MCF 10A (cell line): ENCODE measurements at regions of chr18 and their contacts with region 1.

Region 1: GRCh38 chr18:839224-840022 is 27.4 kb upstream of the YES1 start:
- DNase-seq: peak; percentile 79
- H3K4me3 Mint-ChIP-seq: no peak overlapping the region
- H3K27ac Mint-ChIP-seq: no peak overlapping the region
- H3K4me1 Mint-ChIP-seq: peaks cover 12% of the 10 kb centered on the region
- H3K27me3 Mint-ChIP-seq: no peaks in the 10 kb centered on the region
- CTCF ChIP-seq: peak; percentile 83

Region 2: GRCh38 chr18:286515-287310 is 552.7 kb before region 1 on chr18:
- CTCF ChIA-PET with region 1: interaction called, 4 read pairs
- POLR2A ChIA-PET with region 1: no interaction called
- intact Hi-C with region 1: loop called (anchors 5 kb)
- DNase-seq: peak; percentile 35
- H3K4me3 Mint-ChIP-seq: no peak overlapping the region
- H3K27ac Mint-ChIP-seq: no peak overlapping the region
- H3K4me1 Mint-ChIP-seq: no peaks in the 10 kb centered on the region
- H3K27me3 Mint-ChIP-seq: no peaks in the 10 kb centered on the region
- CTCF ChIP-seq: peak; percentile 28

Region 3: GRCh38 chr18:623761-624620 is 215.4 kb before region 1 on chr18:
- CTCF ChIA-PET with region 1: interaction called, 266 read pairs
- POLR2A ChIA-PET with region 1: no interaction called
- intact Hi-C with region 1: loop called (anchors 1 kb)
- DNase-seq: peak; percentile 69
- H3K4me3 Mint-ChIP-seq: no peak overlapping the region
- H3K27ac Mint-ChIP-seq: no peak overlapping the region
- H3K4me1 Mint-ChIP-seq: peaks cover 8% of the 10 kb centered on the region
- H3K27me3 Mint-ChIP-seq: peaks cover 24% of the 10 kb centered on the region
- CTCF ChIP-seq: peak; percentile 62

Region 4: DNA sequence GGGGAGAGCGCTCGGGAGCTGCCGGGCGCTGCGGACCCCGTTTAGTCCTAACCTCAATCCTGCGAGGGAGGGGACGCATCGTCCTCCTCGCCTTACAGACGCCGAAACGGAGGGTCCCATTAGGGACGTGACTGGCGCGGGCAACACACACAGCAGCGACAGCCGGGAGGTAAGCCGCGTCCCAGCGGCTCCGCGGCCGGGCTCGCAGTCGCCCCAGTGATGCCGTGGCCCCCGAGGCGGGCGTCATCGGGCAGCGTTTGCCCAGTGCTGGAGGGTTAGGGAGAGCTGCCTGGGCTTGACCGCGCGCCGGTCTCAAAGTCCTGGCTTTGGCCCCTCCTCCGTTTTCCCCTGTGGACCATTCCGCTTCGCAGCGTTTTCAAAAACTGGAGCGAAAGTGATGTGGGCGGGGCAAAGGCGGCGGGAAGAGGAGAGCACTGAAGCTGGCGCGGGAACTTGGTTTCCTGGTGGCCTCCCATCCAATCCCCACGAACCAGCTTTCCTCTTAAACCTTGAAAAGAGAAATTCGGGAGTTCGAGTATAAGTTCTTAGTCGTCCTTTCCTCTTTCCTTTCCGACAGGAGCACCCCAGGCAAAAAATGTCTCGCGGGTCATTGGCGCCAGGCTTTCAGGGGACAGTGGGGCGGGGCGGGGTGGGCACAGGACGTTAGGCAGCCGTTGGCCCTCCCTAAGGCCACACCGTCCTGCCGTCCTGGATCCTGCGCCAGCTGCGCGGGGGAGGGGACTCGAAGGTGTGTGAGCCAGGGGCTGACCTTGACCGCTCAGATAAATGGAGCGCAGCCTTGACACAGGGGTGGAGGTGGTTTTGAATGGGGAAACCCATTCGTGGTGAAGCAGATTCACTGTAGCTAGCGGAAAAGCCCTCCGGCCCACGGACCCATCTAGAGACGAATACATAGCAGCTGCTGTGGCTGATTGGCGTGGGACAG is 181.1 kb before region 1 on chr18:
- CTCF ChIA-PET with region 1: interaction called, 10 read pairs
- POLR2A ChIA-PET with region 1: no interaction called
- intact Hi-C with region 1: no loop called
- DNase-seq: peak; percentile 94
- H3K4me3 Mint-ChIP-seq: peak overlapping the region; percentile 81
- H3K27ac Mint-ChIP-seq: no peak overlapping the region
- H3K4me1 Mint-ChIP-seq: peaks cover 6% of the 10 kb centered on the region
- H3K27me3 Mint-ChIP-seq: no peaks in the 10 kb centered on the region
- CTCF ChIP-seq: no peak

Region 5: GRCh38 chr18:741931-742512 is 97.4 kb before region 1 on chr18:
- CTCF ChIA-PET with region 1: interaction called, 277 read pairs
- POLR2A ChIA-PET with region 1: no interaction called
- intact Hi-C with region 1: loop called (anchors 2 kb)
- DNase-seq: peak; percentile 45
- H3K4me3 Mint-ChIP-seq: no peak overlapping the region
- H3K27ac Mint-ChIP-seq: no peak overlapping the region
- H3K4me1 Mint-ChIP-seq: peaks cover 6% of the 10 kb centered on the region
- H3K27me3 Mint-ChIP-seq: no peaks in the 10 kb centered on the region
- CTCF ChIP-seq: peak; percentile 72

Region 6: DNA sequence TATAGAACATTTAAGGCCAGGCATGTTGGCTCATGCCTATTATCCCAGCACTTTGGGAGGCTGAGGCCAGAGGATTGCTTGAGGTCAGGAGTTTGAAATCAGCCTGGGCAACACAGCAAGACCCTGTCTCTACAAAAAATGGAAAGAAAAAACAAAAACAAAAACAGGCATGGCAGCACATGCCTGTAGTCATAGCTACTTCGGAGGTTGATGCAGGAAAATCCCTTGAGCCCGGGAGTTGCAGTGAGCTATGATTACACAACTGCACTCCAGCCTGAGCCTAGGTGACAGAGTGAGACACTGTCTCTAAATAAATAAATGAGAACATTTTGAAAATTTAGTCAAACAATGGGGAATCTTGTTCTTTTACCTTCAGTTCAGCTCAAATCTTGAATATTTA is 15.2 kb before region 1 on chr18:
- CTCF ChIA-PET with region 1: interaction called, 78 read pairs
- POLR2A ChIA-PET with region 1: interaction called, 3 read pairs
- intact Hi-C with region 1: no loop called
- DNase-seq: peak; percentile 51
- H3K4me3 Mint-ChIP-seq: no peak overlapping the region
- H3K27ac Mint-ChIP-seq: peak overlapping the region; percentile 69
- H3K4me1 Mint-ChIP-seq: peaks cover 5% of the 10 kb centered on the region
- H3K27me3 Mint-ChIP-seq: no peaks in the 10 kb centered on the region
- CTCF ChIP-seq: no peak

Region 7: GRCh38 chr18:985212-985661 is 145.8 kb after region 1 on chr18:
- CTCF ChIA-PET with region 1: no interaction called
- POLR2A ChIA-PET with region 1: no interaction called
- intact Hi-C with region 1: no loop called
- DNase-seq: no peak
- H3K4me3 Mint-ChIP-seq: no peak overlapping the region
- H3K27ac Mint-ChIP-seq: no peak overlapping the region
- H3K4me1 Mint-ChIP-seq: no peaks in the 10 kb centered on the region
- H3K27me3 Mint-ChIP-seq: no peaks in the 10 kb centered on the region
- CTCF ChIP-seq: no peak